ENCODE measurements at regions of chr12 and their contacts with region 1.

Region 1: GRCh38 chr12:94867066-94867855 is 136.2 kb downstream of the NDUFA12 start:
- DNase-seq: no peak
- ATAC-seq: no peak
- H3K4me3 Mint-ChIP-seq: no peak overlapping the region
- H3K27ac Mint-ChIP-seq: no peak overlapping the region
- H3K4me1 Mint-ChIP-seq: peaks cover 18% of the 10 kb centered on the region
- H3K27me3 Mint-ChIP-seq: peaks cover 5% of the 10 kb centered on the region
- CTCF ChIP-seq: no peak

Region 2: GRCh38 chr12:94779485-94779884 is 87.8 kb before region 1 on chr12:
- CTCF ChIA-PET with region 1: no interaction called
- POLR2A ChIA-PET with region 1: no interaction called
- intact Hi-C with region 1: no loop called
- DNase-seq: no peak
- ATAC-seq: no peak
- H3K4me3 Mint-ChIP-seq: no peak overlapping the region
- H3K27ac Mint-ChIP-seq: no peak overlapping the region
- H3K4me1 Mint-ChIP-seq: peaks cover 27% of the 10 kb centered on the region
- H3K27me3 Mint-ChIP-seq: no peaks in the 10 kb centered on the region
- CTCF ChIP-seq: no peak

Region 3: GRCh38 chr12:94849411-94849976 is 17.8 kb before region 1 on chr12:
- CTCF ChIA-PET with region 1: no interaction called
- POLR2A ChIA-PET with region 1: interaction called, 12 read pairs
- intact Hi-C with region 1: no loop called
- DNase-seq: no peak
- ATAC-seq: no peak
- H3K4me3 Mint-ChIP-seq: no peak overlapping the region
- H3K27ac Mint-ChIP-seq: no peak overlapping the region
- H3K4me1 Mint-ChIP-seq: peaks cover 24% of the 10 kb centered on the region
- H3K27me3 Mint-ChIP-seq: peaks cover 1% of the 10 kb centered on the region
- CTCF ChIP-seq: no peak

Region 4: DNA sequence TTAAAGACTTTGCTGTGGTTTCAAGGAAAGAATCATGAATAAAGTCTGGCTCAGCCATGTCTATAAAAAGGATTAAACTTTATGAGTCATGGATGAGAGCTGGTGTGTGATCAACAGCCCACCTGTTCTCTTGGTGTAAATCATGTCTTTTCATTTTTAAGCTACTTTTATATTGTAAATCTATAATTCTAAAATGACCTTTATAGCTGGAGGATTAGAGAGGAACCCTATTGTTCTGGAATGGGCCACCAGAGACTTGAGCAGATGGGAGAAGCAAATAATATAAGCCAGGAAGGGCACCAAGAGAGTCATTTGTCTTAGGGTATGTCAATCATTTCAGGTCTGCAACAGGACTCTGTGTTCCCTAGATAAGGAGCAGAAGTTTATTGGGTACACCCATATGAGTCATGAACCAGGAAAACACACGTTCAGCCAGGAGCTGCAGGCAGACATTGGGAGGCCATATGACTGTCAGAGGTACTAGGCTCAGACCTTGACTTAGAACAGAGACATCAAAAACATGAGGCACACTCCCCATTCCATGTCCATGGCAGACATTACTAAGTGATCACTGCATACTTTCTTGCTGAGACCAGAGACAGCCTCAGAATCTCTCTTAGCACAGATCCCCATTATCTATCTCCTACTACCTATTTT is 86.9 kb after region 1 on chr12:
- CTCF ChIA-PET with region 1: no interaction called
- POLR2A ChIA-PET with region 1: no interaction called
- intact Hi-C with region 1: no loop called
- DNase-seq: no peak
- ATAC-seq: no peak
- H3K4me3 Mint-ChIP-seq: no peak overlapping the region
- H3K27ac Mint-ChIP-seq: no peak overlapping the region
- H3K4me1 Mint-ChIP-seq: no peaks in the 10 kb centered on the region
- H3K27me3 Mint-ChIP-seq: peaks cover 3% of the 10 kb centered on the region
- CTCF ChIP-seq: no peak

Measured in activated B cell treated with CpG ODN at 0.5 μM for 24 hours (primary cell).